SK-N-SH (cell line): ENCODE measurements at regions of chr14 and their contacts with region 1.

Region 1: GRCh38 chr14:59507063-59507780 is 22.9 kb downstream of the JKAMP start:
- DNase-seq: peak; percentile 57
- H3K4me3 ChIP-seq: peak overlapping the region in 1 of 2 experiments; percentile 27; a peak in 1 of 4 replicates
- H3K27ac ChIP-seq: no peak overlapping the region
- H3K4me1 ChIP-seq: peaks cover 0 to 1% of the 10 kb centered on the region in 2 experiments; a peak in 1 of 4 replicates
- H3K27me3 ChIP-seq: no peaks in the 10 kb centered on the region; the same call in 1 of the 2 replicates
- CTCF ChIP-seq: peak; percentile 72
- EP300 ChIP-seq: no peak
- RAD21 ChIP-seq: peak; percentile 84

Region 2: DNA sequence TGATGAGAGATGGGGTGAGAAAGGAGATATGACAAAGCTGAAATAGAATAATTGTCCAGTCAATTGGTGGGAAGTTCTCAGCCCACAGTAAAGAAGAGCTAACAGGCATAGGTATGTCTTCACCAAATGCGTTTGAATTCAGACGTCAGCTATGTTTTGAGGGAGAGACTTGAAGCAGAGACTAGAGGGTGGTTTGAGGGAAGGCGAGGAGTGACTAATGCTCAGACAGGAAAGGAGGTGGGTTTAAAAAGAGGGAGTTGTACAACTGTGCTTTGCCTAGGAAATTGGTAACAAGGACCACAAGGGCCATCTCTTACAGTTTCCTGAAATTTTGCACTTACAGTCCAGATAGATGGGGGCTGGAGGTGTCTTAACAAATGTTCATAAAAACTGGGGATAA is 16.5 kb before region 1 on chr14:
- CTCF ChIA-PET with region 1: interaction called, 17 read pairs
- POLR2A ChIA-PET with region 1: interaction called, 3 read pairs
- DNase-seq: no peak
- H3K4me3 ChIP-seq: no peak overlapping the region
- H3K27ac ChIP-seq: no peak overlapping the region
- H3K4me1 ChIP-seq: peaks cover 4 to 5% of the 10 kb centered on the region in 2 experiments; a peak in 2 of 4 replicates
- H3K27me3 ChIP-seq: no peaks in the 10 kb centered on the region
- CTCF ChIP-seq: no peak
- EP300 ChIP-seq: no peak
- RAD21 ChIP-seq: no peak

Region 3: GRCh38 chr14:59534361-59534987 is 27.3 kb after region 1 on chr14:
- CTCF ChIA-PET with region 1: interaction called, 11 read pairs
- POLR2A ChIA-PET with region 1: no interaction called
- DNase-seq: no peak
- H3K4me3 ChIP-seq: no peak overlapping the region
- H3K27ac ChIP-seq: no peak overlapping the region
- H3K4me1 ChIP-seq: peaks cover 0 to 6% of the 10 kb centered on the region in 2 experiments; a peak in 2 of 4 replicates
- H3K27me3 ChIP-seq: no peaks in the 10 kb centered on the region; the same call in 1 of the 2 replicates
- CTCF ChIP-seq: no peak
- EP300 ChIP-seq: no peak
- RAD21 ChIP-seq: no peak

Region 4: GRCh38 chr14:59570114-59570513 is 62.9 kb after region 1 on chr14:
- CTCF ChIA-PET with region 1: interaction called, 34 read pairs
- POLR2A ChIA-PET with region 1: no interaction called
- DNase-seq: no peak
- H3K4me3 ChIP-seq: no peak overlapping the region
- H3K27ac ChIP-seq: no peak overlapping the region
- H3K4me1 ChIP-seq: no peaks in the 10 kb centered on the region; a peak in 1 of 4 replicates
- H3K27me3 ChIP-seq: no peaks in the 10 kb centered on the region; the same call in 1 of the 2 replicates
- CTCF ChIP-seq: no peak
- EP300 ChIP-seq: no peak
- RAD21 ChIP-seq: peak; percentile 46